ENCODE measurements at regions of chr17 and their contacts with region 1.

Region 1: GRCh38 chr17:50478391-50479381 is at the start of gene RSAD1:
- DNase-seq: peak; percentile 79
- H3K4me3 Mint-ChIP-seq: peak within 1 kb of the TSS; percentile 84
- H3K27ac Mint-ChIP-seq: peak within 1 kb of the TSS; percentile 79
- H3K4me1 Mint-ChIP-seq: peaks cover 18% of the 10 kb centered on the region
- H3K27me3 Mint-ChIP-seq: peaks cover 4% of the 10 kb centered on the region
- total RNA-seq, gene RSAD1: 56.8 and 59.0 TPM in 2 replicates

Region 2: GRCh38 chr17:50507871-50508572 is 29.3 kb after region 1 on chr17 and contains the start of gene MYCBPAP:
- intact Hi-C with region 1: loop called (anchors 2 kb)
- DNase-seq: peak; percentile 79
- H3K4me3 Mint-ChIP-seq: peak within 1 kb of the TSS; percentile 90
- H3K27ac Mint-ChIP-seq: peak within 1 kb of the TSS; percentile 90
- H3K4me1 Mint-ChIP-seq: peaks cover 49% of the 10 kb centered on the region
- H3K27me3 Mint-ChIP-seq: no peaks in the 10 kb centered on the region
- total RNA-seq, gene MYCBPAP: 3.1 and 4.4 TPM in 2 replicates

Region 3: DNA sequence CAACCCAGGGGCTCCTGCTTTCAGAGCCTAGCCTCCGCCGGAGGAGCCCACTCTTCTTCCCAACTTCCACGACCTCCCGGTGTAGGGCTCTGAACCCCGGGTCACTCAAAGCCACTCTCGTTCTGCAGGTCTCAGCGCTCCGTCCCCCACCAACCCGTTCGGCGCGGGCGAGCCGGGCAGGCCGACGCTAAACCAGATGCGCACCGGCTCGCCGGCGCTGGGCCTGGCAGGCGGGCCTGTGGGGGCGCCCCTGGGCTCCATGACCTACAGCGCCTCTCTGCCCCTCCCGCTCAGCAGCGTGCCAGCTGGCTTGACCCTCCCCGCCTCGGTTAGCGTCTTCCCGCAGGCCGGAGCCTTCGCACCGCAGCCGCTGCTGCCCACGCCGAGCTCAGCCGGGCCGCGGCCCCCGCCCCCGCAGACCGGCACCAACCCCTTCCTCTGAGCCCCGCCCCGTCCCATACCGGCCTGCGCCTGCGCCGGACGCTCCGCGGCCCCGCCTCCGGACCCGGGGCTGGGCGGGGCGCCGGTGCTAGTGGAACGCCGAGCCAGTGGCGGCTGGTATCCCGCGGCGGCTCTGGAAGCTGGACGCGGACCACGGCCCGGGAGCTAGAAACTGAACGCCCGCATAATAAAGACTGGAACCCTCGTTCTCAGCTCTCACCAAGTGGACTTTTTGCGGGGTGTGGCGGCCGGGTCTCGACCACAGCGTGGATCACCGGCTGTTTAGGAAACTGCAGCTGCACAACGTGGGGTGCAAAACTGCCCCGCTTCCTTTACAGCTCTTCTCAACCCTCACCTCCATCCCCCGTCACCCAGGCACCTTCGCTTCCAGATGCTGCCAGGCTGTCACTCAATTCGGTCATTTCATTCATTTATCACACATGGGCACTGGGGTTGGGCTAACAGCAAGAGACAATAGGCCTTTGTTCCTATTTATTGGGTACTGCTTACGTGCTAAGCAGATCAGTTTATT is 63.3 kb after region 1 on chr17:
- intact Hi-C with region 1: loop called (anchors 1 kb)
- DNase-seq: peak; percentile 83
- H3K4me3 Mint-ChIP-seq: peak overlapping the region; percentile 80
- H3K27ac Mint-ChIP-seq: peak overlapping the region; percentile 6
- H3K4me1 Mint-ChIP-seq: peaks cover 12% of the 10 kb centered on the region
- H3K27me3 Mint-ChIP-seq: peaks cover 18% of the 10 kb centered on the region

Region 4: DNA sequence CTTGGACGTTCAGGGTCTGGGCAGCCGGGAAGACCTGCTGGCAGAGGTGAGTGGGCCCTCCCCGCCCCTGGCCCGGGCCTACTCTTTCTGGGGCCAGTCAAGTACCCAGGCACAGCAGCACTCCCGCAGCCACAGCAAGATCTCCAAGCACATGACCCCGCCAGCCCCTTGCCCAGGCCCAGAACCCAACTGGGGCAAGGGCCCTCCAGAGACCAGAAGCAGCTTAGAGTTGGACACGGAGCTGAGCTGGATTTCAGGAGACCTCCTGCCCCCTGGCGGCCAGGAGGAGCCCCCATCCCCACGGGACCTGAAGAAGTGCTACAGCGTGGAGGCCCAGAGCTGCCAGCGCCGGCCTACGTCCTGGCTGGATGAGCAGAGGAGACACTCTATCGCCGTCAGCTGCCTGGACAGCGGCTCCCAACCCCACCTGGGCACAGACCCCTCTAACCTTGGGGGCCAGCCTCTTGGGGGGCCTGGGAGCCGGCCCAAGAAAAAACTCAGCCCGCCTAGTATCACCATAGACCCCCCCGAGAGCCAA is 147.4 kb after region 1 on chr17:
- intact Hi-C with region 1: loop called (anchors 5 kb)
- DNase-seq: peak; percentile 40
- H3K4me3 Mint-ChIP-seq: no peak overlapping the region
- H3K27ac Mint-ChIP-seq: no peak overlapping the region
- H3K4me1 Mint-ChIP-seq: peaks cover 4% of the 10 kb centered on the region
- H3K27me3 Mint-ChIP-seq: peaks cover 32% of the 10 kb centered on the region

Region 5: DNA sequence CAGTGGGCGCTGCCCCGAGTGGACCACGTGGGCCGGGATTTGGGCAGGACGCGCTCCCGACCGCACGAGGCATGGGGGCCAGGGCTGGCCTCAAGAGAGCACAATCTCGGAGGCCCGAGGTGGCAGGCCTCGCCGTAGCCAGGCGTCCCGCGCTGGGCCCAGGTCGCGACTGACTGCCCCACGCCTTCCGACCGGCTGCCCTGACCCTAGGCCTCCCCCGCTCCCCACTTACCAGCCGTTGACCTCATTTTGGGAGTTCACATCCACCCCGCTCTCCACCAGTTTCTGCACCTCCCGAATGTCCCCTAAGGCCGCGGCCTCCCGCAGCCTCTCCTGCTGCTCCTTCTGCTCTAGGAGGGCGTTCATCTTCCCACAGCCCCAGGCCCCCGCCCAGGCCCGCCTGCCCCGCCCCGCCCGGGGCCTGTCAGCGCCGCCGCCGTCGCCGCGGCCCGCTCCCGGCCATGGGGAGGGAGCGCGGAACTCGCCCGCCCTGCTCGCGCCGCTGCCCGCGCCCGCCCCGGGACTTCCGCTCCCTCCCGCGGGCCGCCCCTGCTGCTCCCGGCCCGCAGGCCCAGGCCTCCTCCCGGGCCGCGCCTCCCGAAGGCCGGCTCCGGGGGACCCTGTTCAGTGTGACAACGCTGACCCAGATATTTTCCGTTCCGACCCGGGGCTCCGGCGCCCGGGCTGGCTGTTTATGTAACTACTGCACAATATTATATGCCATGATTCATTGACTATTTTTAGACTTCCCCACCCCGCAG is 228.8 kb after region 1 on chr17 and contains the start of gene ANKRD40:
- intact Hi-C with region 1: loop called (anchors 10 kb)
- DNase-seq: peak; percentile 91
- H3K4me3 Mint-ChIP-seq: peak within 1 kb of the TSS; percentile 94
- H3K27ac Mint-ChIP-seq: peak within 1 kb of the TSS; percentile 95
- H3K4me1 Mint-ChIP-seq: peaks cover 28% of the 10 kb centered on the region
- H3K27me3 Mint-ChIP-seq: peaks cover 3% of the 10 kb centered on the region
- total RNA-seq, gene ANKRD40: 37.8 and 39.4 TPM in 2 replicates

Measured in activated T-helper 2 cell treated with anti-CD3 and anti-CD28 coated beads, Interferon-gamma antibody, Interleukin-2, Interleukin-4, amounts not matched to agents 10 μg/mL and 5 μg/mL and 100 μg/mL, durations not matched to agents 14 hours and 24 hours and 36 hours (primary cell).